Endothelial cell of umbilical vein (primary cell): ENCODE measurements at regions of chr6 and their contacts with region 1.

Region 1: GRCh38 chr6:122520179-122520578 is 48.6 kb upstream of the SERINC1 start:
- DNase-seq: no peak
- H3K4me3 ChIP-seq: no peak overlapping the region
- H3K27ac ChIP-seq: no peak overlapping the region
- H3K4me1 ChIP-seq: no peaks in the 10 kb centered on the region
- H3K27me3 ChIP-seq: no peaks in the 10 kb centered on the region
- CTCF ChIP-seq: no peak
- POLR2A ChIP-seq: no peak

Region 2: DNA sequence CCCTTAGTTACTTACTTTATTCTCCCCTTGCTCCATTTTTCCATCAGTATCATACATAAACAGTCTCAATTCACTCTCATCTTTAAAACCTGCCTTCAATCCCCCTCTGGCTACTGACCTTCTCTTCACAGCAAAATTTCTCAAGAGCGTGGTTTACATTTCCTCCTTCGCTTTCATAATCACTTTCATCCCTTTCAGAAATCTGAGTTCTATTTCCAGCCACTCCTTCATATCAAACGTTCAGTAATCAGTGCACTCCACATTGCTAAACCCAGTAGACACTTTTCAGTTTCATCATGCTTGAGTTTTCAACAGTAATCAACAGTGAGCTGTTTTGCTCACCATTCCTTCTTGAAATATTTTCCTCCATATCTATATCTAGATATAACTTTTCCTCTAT is 297.4 kb before region 1 on chr6:
- CTCF ChIA-PET with region 1: no interaction called
- POLR2A ChIA-PET with region 1: no interaction called
- dilution Hi-C with region 1: no loop called
- intact Hi-C with region 1: no loop called
- DNase-seq: no peak
- H3K4me3 ChIP-seq: no peak overlapping the region
- H3K27ac ChIP-seq: no peak overlapping the region
- H3K4me1 ChIP-seq: no peaks in the 10 kb centered on the region
- H3K27me3 ChIP-seq: no peaks in the 10 kb centered on the region
- CTCF ChIP-seq: no peak
- POLR2A ChIP-seq: no peak

Region 3: GRCh38 chr6:122322824-122323223 is 197.4 kb before region 1 on chr6:
- CTCF ChIA-PET with region 1: no interaction called
- POLR2A ChIA-PET with region 1: no interaction called
- dilution Hi-C with region 1: no loop called
- intact Hi-C with region 1: no loop called
- DNase-seq: peak; percentile 47
- H3K4me3 ChIP-seq: peak overlapping the region; percentile 25 to 77 (median 62)
- H3K27ac ChIP-seq: no peak overlapping the region
- H3K4me1 ChIP-seq: no peaks in the 10 kb centered on the region
- H3K27me3 ChIP-seq: no peaks in the 10 kb centered on the region
- CTCF ChIP-seq: no peak
- POLR2A ChIP-seq: no peak

Region 4: GRCh38 chr6:122491919-122492555 is 28.1 kb before region 1 on chr6:
- CTCF ChIA-PET with region 1: interaction called, 17 read pairs
- POLR2A ChIA-PET with region 1: no interaction called
- dilution Hi-C with region 1: no loop called
- intact Hi-C with region 1: no loop called
- DNase-seq: peak; percentile 78
- H3K4me3 ChIP-seq: no peak overlapping the region
- H3K27ac ChIP-seq: no peak overlapping the region
- H3K4me1 ChIP-seq: no peaks in the 10 kb centered on the region
- H3K27me3 ChIP-seq: peaks cover 2 to 12% of the 10 kb centered on the region in 2 experiments
- CTCF ChIP-seq: peak; percentile 76 to 82
- POLR2A ChIP-seq: no peak

Region 5: GRCh38 chr6:122553697-122554096 is 33.5 kb after region 1 on chr6:
- CTCF ChIA-PET with region 1: no interaction called
- POLR2A ChIA-PET with region 1: no interaction called
- dilution Hi-C with region 1: no loop called
- intact Hi-C with region 1: no loop called
- DNase-seq: no peak
- H3K4me3 ChIP-seq: no peak overlapping the region
- H3K27ac ChIP-seq: no peak overlapping the region
- H3K4me1 ChIP-seq: no peaks in the 10 kb centered on the region
- H3K27me3 ChIP-seq: no peaks in the 10 kb centered on the region
- CTCF ChIP-seq: no peak
- POLR2A ChIP-seq: no peak

Region 6: GRCh38 chr6:122568797-122569661 is 48.9 kb after region 1 on chr6:
- CTCF ChIA-PET with region 1: no interaction called
- POLR2A ChIA-PET with region 1: no interaction called
- dilution Hi-C with region 1: no loop called
- intact Hi-C with region 1: no loop called
- DNase-seq: no peak
- H3K4me3 ChIP-seq: no peak overlapping the region
- H3K27ac ChIP-seq: no peak overlapping the region
- H3K4me1 ChIP-seq: no peaks in the 10 kb centered on the region
- H3K27me3 ChIP-seq: no peaks in the 10 kb centered on the region
- CTCF ChIP-seq: no peak
- POLR2A ChIP-seq: no peak